ENCODE measurements at regions of chr1 and their contacts with region 1.

Region 1: GRCh38 chr1:190373705-190374336 is 103.8 kb downstream of the BRINP3 start:
- DNase-seq: peak; percentile 38
- ATAC-seq: peak; percentile 81
- H3K4me3 ChIP-seq: no peak overlapping the region
- H3K27ac ChIP-seq: no peak overlapping the region
- H3K4me1 ChIP-seq: no peaks in the 10 kb centered on the region
- H3K27me3 ChIP-seq: no peaks in the 10 kb centered on the region
- CTCF ChIP-seq: peak; percentile 78
- POLR2A ChIP-seq: no peak
- RAD21 ChIP-seq: peak; percentile 78

Region 2: GRCh38 chr1:189708674-189709073 is 665.1 kb before region 1 on chr1:
- CTCF ChIA-PET with region 1: no interaction called
- POLR2A ChIA-PET with region 1: no interaction called
- dilution Hi-C with region 1: no loop called
- in situ Hi-C with region 1: no loop called
- intact Hi-C with region 1: loop called (anchors 10 kb)
- DNase-seq: peak; percentile 25
- ATAC-seq: no peak
- H3K4me3 ChIP-seq: no peak overlapping the region
- H3K27ac ChIP-seq: no peak overlapping the region
- H3K4me1 ChIP-seq: 0 out of 2 replicates have a peak, but pooled peaks cover 1% of the 10 kb centered on the region
- H3K27me3 ChIP-seq: no peaks in the 10 kb centered on the region
- CTCF ChIP-seq: no peak
- POLR2A ChIP-seq: no peak
- RAD21 ChIP-seq: no peak; the same call in 1 of the 2 replicates

Region 3: GRCh38 chr1:189891485-189891884 is 482.3 kb before region 1 on chr1:
- CTCF ChIA-PET with region 1: no interaction called
- POLR2A ChIA-PET with region 1: no interaction called
- dilution Hi-C with region 1: no loop called
- in situ Hi-C with region 1: no loop called
- intact Hi-C with region 1: no loop called
- DNase-seq: no peak
- ATAC-seq: no peak
- H3K4me3 ChIP-seq: no peak overlapping the region
- H3K27ac ChIP-seq: no peak overlapping the region
- H3K4me1 ChIP-seq: no peaks in the 10 kb centered on the region
- H3K27me3 ChIP-seq: no peaks in the 10 kb centered on the region
- CTCF ChIP-seq: no peak
- POLR2A ChIP-seq: no peak
- RAD21 ChIP-seq: no peak

Measured in IMR-90 (cell line).